Activated T-helper 1 cell treated with anti-CD3 and anti-CD28 coated beads, Interleukin-12 subunit alpha, Interleukin-12 subunit beta, Interleukin-2, Interleukin-4 antibody, amounts not matched to agents 30 ng/mL and 10 ng/mL and 1 ng/mL, durations not matched to agents 14 hours and 24 hours and 36 hours (primary cell): ENCODE measurements at regions of chrX and their contacts with region 1.

Region 1: DNA sequence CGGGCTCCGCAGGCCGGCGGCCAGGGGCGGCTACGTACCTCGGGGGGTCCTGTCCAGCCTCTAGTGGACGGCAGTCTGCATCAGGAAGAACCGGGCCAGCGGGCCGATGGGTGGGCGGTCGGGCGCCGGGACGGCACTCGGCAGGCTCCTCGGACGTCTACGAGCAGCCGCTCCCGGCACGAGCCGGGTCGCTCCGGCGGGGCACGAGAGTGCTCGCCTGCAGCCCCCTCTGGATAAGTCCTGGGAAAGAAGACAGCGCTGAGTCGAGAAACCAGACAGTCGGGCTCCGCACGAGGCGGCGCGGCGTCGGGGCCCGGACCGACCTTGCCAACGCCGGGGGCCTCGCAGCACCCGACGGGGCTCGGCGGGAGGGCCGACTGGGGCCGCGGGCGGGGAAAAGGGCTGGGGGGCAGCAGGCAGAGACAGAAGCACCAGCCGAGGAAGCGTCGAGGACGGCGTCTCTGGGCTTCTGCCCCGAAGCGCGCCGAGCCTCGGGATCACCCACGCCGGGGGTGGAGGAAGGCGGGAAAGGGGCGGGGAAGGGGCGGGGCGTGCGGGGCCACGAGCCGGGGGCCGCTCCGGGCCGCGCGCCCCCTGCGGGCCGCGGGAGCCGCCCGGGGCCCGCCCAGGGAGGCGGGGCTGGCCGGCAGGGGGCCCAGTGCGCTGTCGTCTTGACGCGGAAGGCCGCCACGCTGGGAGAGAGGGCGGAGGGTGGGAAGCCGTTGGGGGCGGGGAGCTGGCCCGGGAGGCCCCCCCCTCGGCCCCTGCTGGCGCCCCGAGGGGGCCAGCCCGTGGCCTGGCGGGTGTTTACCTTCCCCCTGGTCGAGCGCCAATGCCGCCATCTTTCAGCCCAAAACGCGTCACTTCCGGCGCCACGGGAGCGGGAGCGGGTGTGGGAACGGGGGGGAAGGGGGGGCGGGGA is 1.9 kb downstream of the KLHL15 start:
- DNase-seq: peak; percentile 72
- H3K4me3 Mint-ChIP-seq: peak overlapping the region; percentile 92
- H3K27ac Mint-ChIP-seq: peak overlapping the region; percentile 88
- H3K4me1 Mint-ChIP-seq: peaks cover 25% of the 10 kb centered on the region
- H3K27me3 Mint-ChIP-seq: no peaks in the 10 kb centered on the region

Region 2: GRCh38 chrX:22365460-22365859 is 1659.6 kb before region 1 on chrX:
- intact Hi-C with region 1: no loop called
- DNase-seq: no peak
- H3K4me3 Mint-ChIP-seq: no peak overlapping the region
- H3K27ac Mint-ChIP-seq: no peak overlapping the region
- H3K4me1 Mint-ChIP-seq: no peaks in the 10 kb centered on the region
- H3K27me3 Mint-ChIP-seq: no peaks in the 10 kb centered on the region

Region 3: GRCh38 chrX:23742697-23743622 is 282.1 kb before region 1 on chrX and contains the start of gene ACOT9:
- intact Hi-C with region 1: loop called (anchors 2 kb)
- DNase-seq: peak; percentile 77
- H3K4me3 Mint-ChIP-seq: peak within 1 kb of the TSS; percentile 93
- H3K27ac Mint-ChIP-seq: peak within 1 kb of the TSS; percentile 92
- H3K4me1 Mint-ChIP-seq: peaks cover 29% of the 10 kb centered on the region
- H3K27me3 Mint-ChIP-seq: no peaks in the 10 kb centered on the region
- total RNA-seq, gene ACOT9: 58.3 and 60.3 TPM in 2 replicates

Region 4: GRCh38 chrX:23937100-23937499 is 88.0 kb before region 1 on chrX:
- intact Hi-C with region 1: no loop called
- DNase-seq: no peak
- H3K4me3 Mint-ChIP-seq: no peak overlapping the region
- H3K27ac Mint-ChIP-seq: no peak overlapping the region
- H3K4me1 Mint-ChIP-seq: peaks cover 4% of the 10 kb centered on the region
- H3K27me3 Mint-ChIP-seq: no peaks in the 10 kb centered on the region

Region 5: DNA sequence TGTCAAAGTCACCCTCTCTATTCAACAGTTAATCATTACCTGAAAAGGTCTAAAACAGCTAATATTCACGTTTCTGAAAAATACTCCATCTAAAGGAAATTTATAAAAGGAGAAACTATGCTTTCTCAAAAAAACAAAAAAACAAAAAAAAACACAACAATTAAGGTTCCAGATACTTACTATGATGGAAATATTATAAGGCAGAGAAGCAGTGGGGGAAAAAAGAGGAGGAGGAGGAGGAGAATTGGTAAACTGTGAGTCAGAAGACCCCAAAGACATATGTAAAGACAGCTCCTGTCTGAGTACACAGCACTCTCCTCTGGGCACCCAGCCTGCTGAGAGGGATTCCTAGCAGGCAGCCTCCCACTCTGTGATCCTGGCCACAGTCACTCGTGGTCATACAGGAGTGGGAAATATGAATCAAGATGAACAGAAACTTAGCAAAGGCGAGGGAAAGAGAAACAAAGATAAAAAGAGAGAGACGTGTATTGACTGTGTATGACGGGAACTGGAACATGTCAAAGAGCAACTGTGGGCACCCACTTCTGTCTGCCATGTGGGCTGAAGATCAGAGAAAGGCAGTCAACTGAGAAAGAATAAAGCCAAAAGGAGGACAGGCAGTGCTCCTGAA is 10.6 kb before region 1 on chrX:
- intact Hi-C with region 1: loop called (anchors 1 kb)
- DNase-seq: peak; percentile 21
- H3K4me3 Mint-ChIP-seq: peak overlapping the region; percentile 64
- H3K27ac Mint-ChIP-seq: peak overlapping the region; percentile 89
- H3K4me1 Mint-ChIP-seq: peaks cover 36% of the 10 kb centered on the region
- H3K27me3 Mint-ChIP-seq: no peaks in the 10 kb centered on the region